Calu3 (cell line): ENCODE measurements at regions of chr12 and their contacts with region 1.

Region 1: DNA sequence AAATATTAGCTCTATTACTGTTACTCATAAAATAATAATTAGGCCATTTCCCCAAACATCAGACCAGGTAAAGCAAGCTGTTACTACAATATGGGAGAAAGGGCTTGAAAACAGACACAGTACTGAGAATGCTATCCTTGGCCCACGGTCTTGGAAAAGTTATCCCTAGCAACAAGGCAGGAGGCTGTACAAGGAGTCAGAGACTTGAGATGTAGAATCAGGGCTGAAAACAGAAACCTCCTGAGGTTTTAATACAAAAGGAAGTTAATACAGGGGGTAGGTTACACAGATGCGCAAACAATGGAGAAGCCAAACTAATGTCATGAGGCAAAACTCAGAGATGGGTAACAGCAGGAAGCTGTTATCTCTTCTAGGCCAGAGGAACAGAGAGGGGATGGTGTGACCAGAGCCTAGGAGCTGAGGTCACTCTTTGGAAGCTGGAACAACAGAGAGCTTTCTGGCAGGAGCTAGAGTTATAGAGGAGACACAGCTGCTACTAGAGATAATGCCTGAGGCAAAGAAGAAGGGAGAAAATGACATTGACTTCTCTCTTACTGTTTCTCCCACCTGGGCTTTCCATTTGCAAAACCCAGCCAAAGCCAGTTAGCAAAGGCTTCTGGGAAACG is 248.8 kb downstream of the SUDS3 start:
- DNase-seq: no peak
- H3K4me3 Mint-ChIP-seq: no peak overlapping the region
- H3K27ac Mint-ChIP-seq: no peak overlapping the region
- H3K4me1 Mint-ChIP-seq: no peaks in the 10 kb centered on the region
- H3K27me3 Mint-ChIP-seq: peaks cover 46% of the 10 kb centered on the region
- CTCF ChIP-seq: no peak

Region 2: GRCh38 chr12:118404876-118405521 is 220.2 kb before region 1 on chr12:
- CTCF ChIA-PET with region 1: interaction called, 11 read pairs
- intact Hi-C with region 1: loop called (anchors 1 kb)
- DNase-seq: peak; percentile 73
- H3K4me3 Mint-ChIP-seq: no peak overlapping the region
- H3K27ac Mint-ChIP-seq: no peak overlapping the region
- H3K4me1 Mint-ChIP-seq: no peaks in the 10 kb centered on the region
- H3K27me3 Mint-ChIP-seq: no peaks in the 10 kb centered on the region
- CTCF ChIP-seq: peak; percentile 65

Region 3: DNA sequence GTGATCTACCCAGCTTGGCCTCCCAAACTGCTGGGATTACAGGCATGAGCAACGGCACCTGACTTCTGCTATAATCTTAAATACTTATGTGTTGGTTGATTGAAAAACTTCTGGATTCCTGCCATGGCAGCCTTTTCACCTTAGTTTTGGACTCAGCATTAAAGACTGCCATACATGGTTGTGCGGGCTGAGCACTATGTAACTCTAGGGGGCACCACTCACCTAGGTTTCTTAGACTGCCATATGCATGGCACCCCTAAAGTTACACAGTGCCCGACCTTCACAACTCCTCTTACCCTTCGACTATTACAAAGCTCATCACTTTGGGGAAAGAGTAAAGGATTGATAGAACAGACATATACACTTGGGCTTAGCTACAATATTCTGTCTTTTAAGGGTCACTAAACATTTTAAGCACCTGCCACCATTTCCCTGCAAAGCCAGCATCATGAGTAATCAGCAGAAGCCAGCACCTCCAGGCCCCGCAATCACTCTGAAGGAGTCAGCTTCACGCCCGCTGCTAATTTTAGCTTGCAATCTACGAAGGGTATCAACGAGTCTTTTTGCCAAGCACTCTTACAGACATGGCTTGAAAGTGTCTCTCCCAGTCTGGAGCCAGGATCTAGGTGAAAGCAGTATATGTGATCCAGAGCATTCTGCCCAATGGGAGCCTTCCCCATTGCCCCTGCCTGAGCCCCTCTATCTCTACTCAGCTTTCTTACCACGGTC is 189.0 kb before region 1 on chr12:
- CTCF ChIA-PET with region 1: no interaction called
- intact Hi-C with region 1: loop called (anchors 10 kb)
- DNase-seq: peak; percentile 28
- H3K4me3 Mint-ChIP-seq: no peak overlapping the region
- H3K27ac Mint-ChIP-seq: no peak overlapping the region
- H3K4me1 Mint-ChIP-seq: no peaks in the 10 kb centered on the region
- H3K27me3 Mint-ChIP-seq: peaks cover 5% of the 10 kb centered on the region
- CTCF ChIP-seq: no peak

Region 4: DNA sequence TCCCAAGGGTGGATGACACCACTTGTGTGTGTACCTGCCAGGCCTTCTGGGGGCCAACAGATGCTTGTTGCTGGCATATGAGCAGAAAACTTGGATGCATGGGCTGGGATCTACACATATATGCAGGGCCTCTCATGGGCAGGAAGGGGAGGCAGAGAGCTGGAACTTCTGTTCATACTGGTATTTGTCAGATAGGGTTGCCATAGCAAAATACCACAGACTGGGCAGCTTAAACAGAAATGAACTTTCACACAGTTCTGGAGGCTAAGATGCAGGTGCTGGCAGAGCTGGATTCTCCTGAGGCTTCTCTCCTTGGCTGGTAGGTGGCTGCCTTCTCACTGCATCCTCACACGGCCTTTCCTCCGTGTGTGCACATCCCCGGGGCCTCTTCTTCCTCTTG is 127.0 kb before region 1 on chr12:
- CTCF ChIA-PET with region 1: no interaction called
- intact Hi-C with region 1: loop called (anchors 1 kb)
- DNase-seq: peak; percentile 40
- H3K4me3 Mint-ChIP-seq: no peak overlapping the region
- H3K27ac Mint-ChIP-seq: no peak overlapping the region
- H3K4me1 Mint-ChIP-seq: peaks cover 8% of the 10 kb centered on the region
- H3K27me3 Mint-ChIP-seq: peaks cover 13% of the 10 kb centered on the region
- CTCF ChIP-seq: no peak

Region 5: DNA sequence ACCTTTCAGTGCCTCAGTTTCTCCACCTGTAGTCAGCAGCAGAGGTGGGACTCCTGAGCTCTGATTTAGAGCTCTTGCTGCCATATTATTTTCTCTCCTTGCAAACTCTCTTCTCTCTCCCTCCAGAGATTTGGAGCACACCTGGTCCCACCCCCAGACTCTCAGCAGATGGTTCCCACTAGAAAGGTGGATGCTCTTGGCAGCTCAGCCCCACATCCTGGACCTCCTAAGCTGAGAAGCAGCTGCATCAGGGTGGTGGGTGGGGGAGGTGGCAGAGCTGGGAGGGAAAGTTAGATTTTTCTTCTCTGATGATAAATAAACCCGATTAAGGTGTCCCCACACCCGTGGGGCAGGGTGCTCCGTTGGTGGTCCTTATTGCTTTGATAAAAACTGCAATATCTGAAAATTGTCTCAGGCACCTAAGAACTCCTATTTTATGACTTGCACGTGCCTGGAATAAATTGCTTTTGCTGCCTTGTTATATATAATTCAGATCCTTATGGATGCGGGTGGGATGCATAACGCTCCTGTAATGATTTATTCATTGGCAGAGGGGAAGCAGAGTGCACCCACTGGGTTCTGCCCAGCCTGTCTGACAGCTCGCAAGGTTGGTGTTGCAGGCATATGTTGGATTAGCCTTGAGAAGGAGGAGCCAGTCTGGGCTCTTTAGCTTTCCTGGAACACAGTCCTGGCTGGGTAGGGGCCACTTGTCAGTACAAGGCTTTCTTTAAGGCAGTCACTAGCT is 34.6 kb before region 1 on chr12:
- CTCF ChIA-PET with region 1: interaction called, 3 read pairs
- intact Hi-C with region 1: loop called (anchors 1 kb)
- DNase-seq: no peak
- H3K4me3 Mint-ChIP-seq: no peak overlapping the region
- H3K27ac Mint-ChIP-seq: no peak overlapping the region
- H3K4me1 Mint-ChIP-seq: no peaks in the 10 kb centered on the region
- H3K27me3 Mint-ChIP-seq: peaks cover 39% of the 10 kb centered on the region
- CTCF ChIP-seq: no peak

Region 6: DNA sequence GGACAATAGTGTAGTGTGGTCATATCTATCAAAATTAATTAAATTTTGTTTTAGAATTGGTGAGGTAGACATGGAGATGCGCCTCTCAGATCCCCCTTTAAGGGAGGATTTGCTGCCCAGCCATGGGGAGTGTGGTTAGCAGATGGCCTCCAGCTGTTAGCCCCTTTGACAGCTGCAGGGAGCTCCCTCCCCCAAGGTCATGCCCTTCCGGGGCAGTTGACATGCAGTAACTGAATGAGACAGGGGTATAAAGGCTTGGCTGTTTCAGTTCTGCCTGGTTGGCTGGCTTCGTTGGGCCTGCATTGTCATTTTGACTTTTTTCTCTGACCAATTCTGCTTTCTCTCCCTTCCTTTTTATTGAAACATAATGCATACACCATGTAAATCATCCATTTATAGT is 64.6 kb after region 1 on chr12:
- CTCF ChIA-PET with region 1: no interaction called
- intact Hi-C with region 1: no loop called
- DNase-seq: no peak
- H3K4me3 Mint-ChIP-seq: no peak overlapping the region
- H3K27ac Mint-ChIP-seq: no peak overlapping the region
- H3K4me1 Mint-ChIP-seq: no peaks in the 10 kb centered on the region
- H3K27me3 Mint-ChIP-seq: peaks cover 4% of the 10 kb centered on the region
- CTCF ChIP-seq: no peak